Cardiac septum (tissue), 1 donor: ENCODE measurements at regions of chr2 and their contacts with region 1.

Region 1: GRCh38 chr2:166784296-166784946 is 103.9 kb upstream of the XIRP2 start:
- DNase-seq: no peak

Region 2: DNA sequence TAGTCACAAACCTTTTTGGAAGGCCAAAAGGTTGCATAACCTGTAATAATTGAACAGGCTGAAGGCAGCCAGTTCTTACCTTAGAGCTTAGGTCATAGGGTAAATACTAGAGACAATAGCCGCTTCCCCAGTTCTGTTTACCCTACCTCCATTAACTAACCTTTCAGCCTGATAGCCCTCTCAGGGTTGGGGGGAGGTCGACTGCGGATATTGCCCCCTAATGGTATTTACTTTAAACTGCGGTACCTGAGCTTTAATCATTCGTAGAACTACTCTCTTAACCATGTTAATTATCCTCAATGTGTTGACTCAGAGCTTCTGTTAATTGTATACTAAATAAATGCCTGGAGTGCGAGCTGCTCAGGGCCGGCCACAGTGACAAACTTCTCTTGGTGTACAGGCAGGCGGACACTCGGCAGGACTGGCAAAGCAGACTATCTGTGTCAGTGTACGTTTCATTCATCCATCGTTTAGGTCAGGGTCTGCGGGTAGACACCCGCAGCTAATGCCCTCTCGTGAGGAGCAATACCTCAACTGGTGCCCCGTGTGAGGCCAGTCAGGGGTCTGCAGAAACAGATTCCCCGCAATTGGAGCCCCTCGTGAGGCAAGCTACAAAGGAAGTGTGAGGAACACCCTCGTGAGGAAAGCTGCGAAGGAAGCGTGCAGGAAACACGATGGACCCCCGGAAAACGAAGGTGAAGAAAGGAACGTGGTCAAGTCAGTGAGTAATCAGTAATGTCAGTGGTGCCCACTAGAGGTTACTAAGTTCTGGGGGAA is 175.1 kb before region 1 on chr2:
- intact Hi-C with region 1: loop called (anchors 10 kb)
- DNase-seq: no peak